Caco-2 (cell line): ENCODE measurements at regions of chr9 and their contacts with region 1.

Region 1: DNA sequence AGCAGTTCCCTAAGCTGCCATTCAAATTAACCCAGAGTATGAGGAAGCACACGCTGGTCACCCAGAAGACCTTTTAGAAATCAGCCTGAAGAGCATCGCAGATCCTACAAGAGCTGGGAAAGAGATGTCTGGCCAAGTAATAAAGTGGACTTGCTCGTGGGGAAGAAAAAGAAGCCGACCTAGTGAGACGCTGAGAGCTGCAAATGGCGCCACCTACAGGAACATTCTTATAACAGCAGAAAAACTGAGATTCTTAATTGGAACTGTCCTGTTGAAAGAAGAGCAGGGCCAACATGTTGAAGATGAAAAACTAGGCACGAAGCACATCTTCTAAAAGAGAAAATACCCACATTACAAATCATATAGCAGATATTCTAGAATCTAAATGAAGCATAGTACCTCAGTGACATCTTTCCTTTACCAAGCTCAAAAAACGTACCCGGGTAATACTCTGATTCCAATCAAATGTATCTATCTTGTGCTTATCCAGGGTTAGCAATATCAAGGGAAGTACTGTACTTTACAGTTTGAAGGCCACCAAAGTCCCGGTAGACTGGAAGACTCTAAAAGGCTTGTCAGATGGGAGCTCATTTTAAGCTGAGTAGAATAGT is 3.9 kb upstream of the GNAQ start:
- DNase-seq: peak; percentile 19 to 24
- H3K4me3 ChIP-seq: no peak overlapping the region
- H3K4me3 Mint-ChIP-seq: no peak overlapping the region
- H3K27ac Mint-ChIP-seq: no peak overlapping the region
- H3K4me1 ChIP-seq: no peaks in the 10 kb centered on the region
- H3K4me1 Mint-ChIP-seq: no peaks in the 10 kb centered on the region
- H3K27me3 ChIP-seq: no peaks in the 10 kb centered on the region
- H3K27me3 Mint-ChIP-seq: no peaks in the 10 kb centered on the region
- CTCF ChIP-seq: peak; percentile 34 to 35

Region 2: GRCh38 chr9:77764894-77765780 is 270.4 kb before region 1 on chr9:
- CTCF ChIA-PET with region 1: no interaction called
- POLR2A ChIA-PET with region 1: no interaction called
- intact Hi-C with region 1: loop called (anchors 5 kb)
- DNase-seq: no peak
- H3K4me3 ChIP-seq: no peak overlapping the region
- H3K4me3 Mint-ChIP-seq: no peak overlapping the region
- H3K27ac Mint-ChIP-seq: no peak overlapping the region
- H3K4me1 ChIP-seq: no peaks in the 10 kb centered on the region
- H3K4me1 Mint-ChIP-seq: no peaks in the 10 kb centered on the region
- H3K27me3 ChIP-seq: no peaks in the 10 kb centered on the region
- H3K27me3 Mint-ChIP-seq: no peaks in the 10 kb centered on the region
- CTCF ChIP-seq: peak in 1 of 2 experiments; percentile 19

Region 3: DNA sequence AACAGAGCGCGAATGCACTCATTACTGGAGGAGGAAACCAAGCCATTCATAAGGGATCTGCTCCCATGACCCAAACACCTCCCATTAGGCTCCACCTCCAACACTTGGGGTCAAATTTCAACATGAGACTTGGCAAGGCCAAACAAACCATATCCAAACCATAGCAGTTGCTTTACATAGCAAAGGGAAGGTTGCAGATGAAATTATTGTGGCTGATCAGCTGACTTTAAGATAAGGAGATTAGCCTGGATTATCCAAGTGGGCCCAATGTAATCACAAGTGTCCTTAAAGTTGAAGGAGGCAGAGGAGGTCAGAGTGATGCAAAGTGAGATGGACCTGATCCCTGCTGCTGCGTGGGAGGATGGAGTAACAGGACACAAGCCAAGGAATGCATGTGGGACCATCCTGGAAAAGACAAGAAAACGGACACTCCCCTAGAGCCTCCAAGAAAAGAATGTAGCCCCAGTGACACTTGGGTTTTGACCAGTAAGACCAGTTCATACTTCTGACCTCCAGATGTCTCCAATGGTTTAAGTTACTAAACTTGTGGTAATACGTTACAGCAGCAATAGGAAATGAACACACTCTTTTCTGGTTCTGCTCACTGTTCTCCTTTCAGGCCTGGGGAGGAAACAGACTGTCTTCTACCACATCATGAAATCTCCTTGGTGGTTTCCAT is 171.1 kb before region 1 on chr9:
- CTCF ChIA-PET with region 1: no interaction called
- POLR2A ChIA-PET with region 1: no interaction called
- intact Hi-C with region 1: loop called (anchors 2 kb)
- DNase-seq: peak in 1 of 2 experiments; percentile 24
- H3K4me3 ChIP-seq: no peak overlapping the region
- H3K4me3 Mint-ChIP-seq: no peak overlapping the region
- H3K27ac Mint-ChIP-seq: no peak overlapping the region
- H3K4me1 ChIP-seq: no peaks in the 10 kb centered on the region
- H3K4me1 Mint-ChIP-seq: no peaks in the 10 kb centered on the region
- H3K27me3 ChIP-seq: no peaks in the 10 kb centered on the region
- H3K27me3 Mint-ChIP-seq: no peaks in the 10 kb centered on the region
- CTCF ChIP-seq: no peak

Region 4: DNA sequence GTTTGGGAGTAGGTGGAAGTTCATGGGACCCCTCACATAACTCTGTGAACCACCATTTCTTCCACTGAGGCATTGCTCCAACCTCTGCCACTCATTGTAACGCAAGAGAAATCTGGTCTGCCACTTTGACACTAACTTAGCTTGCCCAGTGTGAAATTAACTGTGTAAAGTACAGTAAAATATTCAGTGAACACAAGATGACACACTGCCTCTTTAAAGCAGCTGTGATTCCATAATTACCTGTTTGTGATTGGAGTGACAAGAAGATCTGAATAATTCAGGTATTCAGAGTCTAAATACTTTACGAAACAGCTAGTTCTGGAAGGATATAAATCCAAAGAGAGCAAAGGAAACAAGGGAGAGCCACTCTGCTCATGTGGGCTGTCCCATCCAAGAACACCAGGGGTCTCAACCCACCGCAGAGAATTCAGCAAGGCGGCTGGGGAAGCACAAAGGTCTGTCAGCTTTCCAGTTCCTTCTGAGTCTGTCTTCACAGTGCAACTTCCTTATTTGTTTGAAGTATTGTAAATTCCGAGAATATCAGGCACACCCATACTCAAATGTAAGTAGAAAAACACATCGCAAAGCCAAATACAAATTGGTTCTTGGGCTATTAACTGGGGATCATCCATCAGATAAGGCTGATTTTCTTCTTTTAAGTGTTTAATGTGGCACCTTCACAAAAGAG is 90.8 kb before region 1 on chr9:
- CTCF ChIA-PET with region 1: no interaction called
- POLR2A ChIA-PET with region 1: no interaction called
- intact Hi-C with region 1: loop called (anchors 1 kb)
- DNase-seq: peak; percentile 23 to 42
- H3K4me3 ChIP-seq: no peak overlapping the region
- H3K4me3 Mint-ChIP-seq: no peak overlapping the region
- H3K27ac Mint-ChIP-seq: peak overlapping the region; percentile 48
- H3K4me1 ChIP-seq: 0 out of 2 replicates have a peak, but pooled peaks cover 3% of the 10 kb centered on the region
- H3K4me1 Mint-ChIP-seq: peaks cover 1% of the 10 kb centered on the region
- H3K27me3 ChIP-seq: no peaks in the 10 kb centered on the region
- H3K27me3 Mint-ChIP-seq: no peaks in the 10 kb centered on the region
- CTCF ChIP-seq: peak in 1 of 2 experiments; percentile 12

Region 5: GRCh38 chr9:77977210-77977611 is 58.3 kb before region 1 on chr9:
- CTCF ChIA-PET with region 1: no interaction called
- POLR2A ChIA-PET with region 1: no interaction called
- intact Hi-C with region 1: loop called (anchors 1 kb)
- DNase-seq: peak in 1 of 2 experiments; percentile 19
- H3K4me3 ChIP-seq: no peak overlapping the region
- H3K4me3 Mint-ChIP-seq: no peak overlapping the region
- H3K27ac Mint-ChIP-seq: no peak overlapping the region
- H3K4me1 ChIP-seq: no peaks in the 10 kb centered on the region
- H3K4me1 Mint-ChIP-seq: no peaks in the 10 kb centered on the region
- H3K27me3 ChIP-seq: no peaks in the 10 kb centered on the region
- H3K27me3 Mint-ChIP-seq: no peaks in the 10 kb centered on the region
- CTCF ChIP-seq: no peak

Region 6: DNA sequence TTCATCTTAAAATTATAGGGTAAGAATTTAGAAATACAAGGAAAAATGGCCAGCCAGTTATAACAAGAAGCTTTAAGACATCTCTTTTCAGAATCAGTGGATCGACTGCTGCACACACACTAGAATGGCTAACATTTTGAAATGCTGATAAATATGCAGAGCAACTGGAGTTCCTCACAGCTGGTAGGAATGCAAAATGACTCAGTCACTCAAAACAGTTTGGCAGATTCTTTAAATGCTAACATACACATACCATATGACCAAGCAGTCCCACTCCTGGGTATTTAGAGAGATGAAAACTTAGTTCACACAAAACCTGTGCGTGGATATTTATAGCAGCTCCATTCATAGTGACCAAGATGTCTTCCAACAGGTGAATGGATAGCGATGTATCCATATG is 238.3 kb after region 1 on chr9:
- CTCF ChIA-PET with region 1: no interaction called
- POLR2A ChIA-PET with region 1: no interaction called
- intact Hi-C with region 1: no loop called
- DNase-seq: no peak
- H3K4me3 ChIP-seq: no peak overlapping the region
- H3K4me3 Mint-ChIP-seq: no peak overlapping the region
- H3K27ac Mint-ChIP-seq: no peak overlapping the region
- H3K4me1 ChIP-seq: no peaks in the 10 kb centered on the region
- H3K4me1 Mint-ChIP-seq: no peaks in the 10 kb centered on the region
- H3K27me3 ChIP-seq: no peaks in the 10 kb centered on the region
- H3K27me3 Mint-ChIP-seq: no peaks in the 10 kb centered on the region
- CTCF ChIP-seq: no peak